Activated naive CD4-positive, alpha-beta T cell treated with anti-CD3 and anti-CD28 coated beads for 36 hours (primary cell): ENCODE measurements at regions of chr5 and their contacts with region 1.

Region 1: DNA sequence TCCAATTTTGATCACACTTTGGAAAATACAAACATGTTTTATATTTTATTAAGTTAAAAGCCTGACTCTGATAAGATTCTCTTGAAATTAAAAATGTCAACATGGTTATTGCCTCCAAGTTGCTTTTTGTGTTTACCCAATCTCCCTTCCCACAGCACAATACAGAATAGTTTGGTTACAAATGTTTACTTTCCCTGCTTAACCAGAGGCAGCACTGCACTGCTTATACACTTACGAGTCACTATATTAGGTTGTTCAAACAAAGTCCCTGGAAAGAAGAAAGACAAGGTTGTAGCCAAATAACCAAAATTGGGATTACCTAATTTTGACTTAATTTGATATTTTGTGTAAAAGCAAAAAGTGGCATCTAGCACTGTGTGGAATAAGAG is 25.9 kb downstream of the SRFBP1 start:
- DNase-seq: no peak
- H3K4me3 Mint-ChIP-seq: no peak overlapping the region
- H3K27ac Mint-ChIP-seq: no peak overlapping the region
- H3K4me1 Mint-ChIP-seq: peaks cover 15% of the 10 kb centered on the region
- H3K27me3 Mint-ChIP-seq: no peaks in the 10 kb centered on the region

Region 2: DNA sequence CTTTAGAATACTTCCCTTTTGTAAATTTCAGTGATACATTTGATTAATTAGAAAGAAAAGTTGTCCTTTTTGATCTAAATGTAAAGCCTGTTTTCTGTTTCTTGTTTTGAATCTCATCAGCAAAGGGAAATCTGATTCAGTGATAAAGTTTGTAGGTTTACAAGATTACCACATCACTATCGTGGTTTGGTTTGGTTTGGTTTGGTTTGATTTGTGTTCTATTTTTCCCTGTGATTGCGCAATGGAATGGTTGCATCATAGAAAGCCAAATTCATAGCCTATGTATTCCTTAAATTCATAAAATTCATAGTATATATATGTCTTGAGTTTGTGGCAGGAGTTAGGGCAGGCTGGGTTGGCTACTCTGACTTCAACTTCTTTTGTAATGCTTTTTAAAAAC is 10.7 kb before region 1 on chr5:
- CTCF ChIA-PET with region 1: no interaction called
- intact Hi-C with region 1: loop called (anchors 1 kb)
- DNase-seq: no peak
- H3K4me3 Mint-ChIP-seq: no peak overlapping the region
- H3K27ac Mint-ChIP-seq: no peak overlapping the region
- H3K4me1 Mint-ChIP-seq: peaks cover 38% of the 10 kb centered on the region
- H3K27me3 Mint-ChIP-seq: no peaks in the 10 kb centered on the region

Region 3: GRCh38 chr5:122163121-122164069 is 175.7 kb after region 1 on chr5:
- CTCF ChIA-PET with region 1: no interaction called
- intact Hi-C with region 1: no loop called
- DNase-seq: no peak
- H3K4me3 Mint-ChIP-seq: no peak overlapping the region
- H3K27ac Mint-ChIP-seq: no peak overlapping the region
- H3K4me1 Mint-ChIP-seq: no peaks in the 10 kb centered on the region
- H3K27me3 Mint-ChIP-seq: peaks cover 2% of the 10 kb centered on the region

Region 4: DNA sequence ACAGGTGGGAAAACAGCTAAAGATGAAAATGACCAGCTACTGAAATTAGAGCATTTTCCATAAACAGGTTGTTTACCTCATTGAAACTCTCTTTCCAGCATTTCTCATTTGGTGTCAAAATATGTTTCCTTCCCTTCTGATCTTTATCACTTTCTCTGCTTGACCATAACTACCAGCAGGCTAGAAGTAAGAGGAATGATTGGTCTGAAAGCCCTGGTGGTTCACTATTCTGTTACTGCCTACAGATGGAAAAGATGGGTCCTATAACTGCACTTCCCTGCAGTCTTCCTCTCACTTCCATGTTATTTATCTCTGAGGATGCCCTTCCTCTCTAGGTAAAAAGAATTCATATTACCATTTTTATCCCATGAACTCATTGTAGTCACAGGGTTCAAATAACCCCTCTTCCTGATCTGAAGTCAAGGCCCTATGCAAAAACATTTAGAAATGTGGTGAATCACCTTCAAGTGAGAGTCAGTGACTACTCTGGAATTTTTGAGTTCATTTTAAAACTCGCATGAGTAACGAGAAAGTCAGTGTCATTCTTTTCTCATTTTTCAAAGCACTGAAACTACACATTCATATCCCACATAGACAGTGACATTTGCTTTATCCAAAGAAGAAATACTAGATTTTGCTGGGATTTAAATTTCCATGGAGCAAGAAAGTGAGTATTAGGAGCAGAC is 193.3 kb after region 1 on chr5:
- CTCF ChIA-PET with region 1: no interaction called
- intact Hi-C with region 1: loop called (anchors 1 kb)
- DNase-seq: no peak
- H3K4me3 Mint-ChIP-seq: no peak overlapping the region
- H3K27ac Mint-ChIP-seq: peak overlapping the region; percentile 30
- H3K4me1 Mint-ChIP-seq: peaks cover 17% of the 10 kb centered on the region
- H3K27me3 Mint-ChIP-seq: peaks cover 26% of the 10 kb centered on the region

Region 5: GRCh38 chr5:122565331-122565730 is 577.7 kb after region 1 on chr5:
- CTCF ChIA-PET with region 1: no interaction called
- intact Hi-C with region 1: no loop called
- DNase-seq: no peak
- H3K4me3 Mint-ChIP-seq: no peak overlapping the region
- H3K27ac Mint-ChIP-seq: no peak overlapping the region
- H3K4me1 Mint-ChIP-seq: no peaks in the 10 kb centered on the region
- H3K27me3 Mint-ChIP-seq: peaks cover 2% of the 10 kb centered on the region